Cardiac septum (tissue), 1 donor: ENCODE measurements at regions of chr2 and their contacts with region 1.

Region 1: DNA sequence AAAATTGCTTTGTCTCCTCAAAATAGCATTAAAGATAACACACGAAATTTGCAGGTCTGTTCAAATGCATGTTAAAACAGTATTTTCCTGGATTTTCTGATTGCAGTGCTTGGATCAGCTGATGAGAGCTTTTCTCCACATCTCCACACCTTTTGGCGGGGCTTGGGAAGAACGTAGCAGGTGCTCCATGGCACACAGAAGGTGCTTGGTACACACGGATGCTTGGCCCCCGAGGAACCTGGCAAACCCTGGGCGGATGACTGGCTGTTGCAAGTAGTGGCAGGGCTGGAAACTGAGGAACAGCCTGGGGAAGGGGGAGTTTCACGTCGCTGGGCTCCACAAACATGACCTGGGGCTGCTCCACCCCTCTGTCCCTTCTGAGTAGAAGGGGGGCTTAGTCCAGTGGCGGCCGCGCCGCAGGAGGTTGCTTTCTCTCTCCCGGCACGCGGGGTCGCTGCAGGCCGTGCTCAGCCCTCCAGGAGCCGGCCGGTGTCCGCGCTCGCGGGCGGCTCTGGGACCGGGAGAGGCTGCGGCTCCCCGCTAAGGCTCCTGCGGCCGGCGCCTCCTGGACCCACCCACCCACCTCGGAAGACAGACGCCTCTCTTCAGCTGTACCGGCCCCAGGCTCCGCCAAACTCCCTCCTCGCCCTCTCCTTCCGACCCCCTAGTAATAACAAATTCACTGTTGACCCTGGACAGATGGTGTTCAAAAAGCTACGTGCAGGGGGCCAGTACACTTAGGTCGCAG is 69.3 kb downstream of the MARCO start:
- DNase-seq: no peak

Region 2: DNA sequence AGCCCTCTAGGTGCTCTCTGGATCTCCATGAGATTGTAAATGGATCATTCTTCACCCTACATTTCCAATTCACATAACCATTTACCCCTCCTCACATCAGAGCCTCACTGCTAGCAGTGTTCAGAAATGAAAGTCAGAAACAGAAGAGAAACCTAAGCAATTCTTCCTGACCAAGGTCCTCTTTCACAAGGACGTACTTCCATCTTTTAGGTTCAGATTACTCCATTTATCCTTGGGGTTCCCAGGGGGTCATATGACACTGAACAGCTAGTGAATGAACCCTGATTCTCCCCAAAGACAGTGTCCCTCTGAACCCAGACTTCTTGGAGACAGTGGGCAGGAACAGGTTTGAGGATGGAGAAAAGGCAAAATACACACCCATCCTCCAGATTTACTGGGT is 82.3 kb before region 1 on chr2:
- intact Hi-C with region 1: no loop called
- DNase-seq: no peak

Region 3: GRCh38 chr2:118974103-118974993 is 37.0 kb before region 1 on chr2:
- intact Hi-C with region 1: no loop called
- DNase-seq: no peak

Region 4: DNA sequence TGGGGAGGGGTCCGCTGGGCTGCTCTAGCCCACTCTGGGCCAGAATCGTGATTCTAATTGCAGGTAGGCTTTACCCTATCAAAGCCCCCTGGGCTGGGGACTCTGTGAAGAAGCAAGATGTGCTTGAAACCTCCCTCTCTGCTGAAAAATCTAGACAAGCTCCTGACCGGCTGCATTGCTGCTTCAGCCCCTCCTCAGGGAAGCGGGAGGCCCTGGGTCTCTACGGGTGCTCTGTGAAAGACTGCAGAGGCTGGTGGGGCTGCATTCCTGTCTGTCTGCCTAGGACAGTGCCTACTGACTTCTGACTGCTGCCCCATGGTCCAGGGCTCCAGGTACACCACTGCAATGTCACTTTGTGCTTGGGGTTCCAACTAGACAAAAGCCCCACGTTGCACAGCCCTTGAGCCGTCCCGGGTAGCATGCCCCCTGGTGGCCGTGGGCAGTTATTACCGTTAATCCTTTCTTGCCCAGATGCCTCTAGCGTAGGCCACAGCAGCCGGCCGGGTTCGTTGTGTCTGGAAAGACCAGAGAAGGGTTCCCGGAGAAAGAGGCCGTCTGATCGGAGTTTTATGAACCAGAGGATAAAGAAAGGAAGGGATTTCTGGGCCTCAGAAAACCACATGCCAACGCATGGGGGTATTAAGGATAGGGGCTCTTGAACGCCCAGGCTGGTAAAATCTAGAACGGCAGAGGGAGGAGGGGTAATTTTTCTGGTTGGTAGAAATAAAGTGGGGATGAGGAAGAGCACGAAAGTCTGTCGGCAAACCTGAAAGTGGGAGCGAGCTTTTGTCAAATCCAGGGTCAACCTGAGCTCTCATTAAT is 163.1 kb after region 1 on chr2:
- intact Hi-C with region 1: loop called (anchors 10 kb)
- DNase-seq: no peak